ENCODE measurements at regions of chr2 and their contacts with region 1.

Region 1: GRCh38 chr2:196549052-196549451 is 90.5 kb upstream of the CCDC150 start:
- DNase-seq: no peak
- ATAC-seq: no peak
- H3K4me3 ChIP-seq: no peak overlapping the region
- H3K27ac ChIP-seq: no peak overlapping the region
- H3K4me1 ChIP-seq: no peaks in the 10 kb centered on the region
- H3K27me3 ChIP-seq: no peaks in the 10 kb centered on the region; a peak in 2 of 5 replicates
- CTCF ChIP-seq: no peak
- EP300 ChIP-seq: no peak
- POLR2A ChIP-seq: no peak
- RAD21 ChIP-seq: no peak

Region 2: DNA sequence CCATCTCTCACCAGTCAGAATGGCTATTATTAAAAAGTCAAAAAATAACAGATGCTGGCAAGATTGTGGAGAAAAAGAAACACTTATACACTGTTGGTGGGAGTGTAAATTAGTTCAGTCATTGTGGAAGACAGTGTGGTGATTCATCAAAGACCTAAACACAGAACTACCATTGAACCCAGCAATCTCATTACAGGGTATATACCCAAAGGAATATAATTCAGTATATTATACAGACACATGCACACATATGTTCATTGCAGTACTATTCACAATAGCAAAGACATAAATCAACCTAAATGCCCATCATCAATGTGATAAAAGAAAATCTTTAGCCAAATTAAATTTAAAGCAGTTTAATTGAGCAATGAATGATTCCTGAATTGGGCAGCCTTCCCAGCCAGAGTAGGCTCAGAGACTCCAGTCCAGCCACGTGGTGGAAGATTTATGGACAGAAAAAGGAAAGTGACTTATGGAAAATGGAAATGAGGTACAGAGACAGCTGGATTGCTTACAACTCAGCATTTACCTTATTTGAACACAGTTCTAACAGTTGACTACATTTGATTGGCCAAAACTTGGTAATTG is 1269.1 kb before region 1 on chr2:
- CTCF ChIA-PET with region 1: no interaction called
- POLR2A ChIA-PET with region 1: no interaction called
- in situ Hi-C with region 1: no loop called
- intact Hi-C with region 1: no loop called
- DNase-seq: no peak
- ATAC-seq: no peak
- H3K4me3 ChIP-seq: no peak overlapping the region
- H3K27ac ChIP-seq: no peak overlapping the region
- H3K4me1 ChIP-seq: no peaks in the 10 kb centered on the region
- H3K27me3 ChIP-seq: no peaks in the 10 kb centered on the region; a peak in 1 of 5 replicates
- CTCF ChIP-seq: no peak
- EP300 ChIP-seq: no peak
- POLR2A ChIP-seq: no peak
- RAD21 ChIP-seq: no peak

Region 3: GRCh38 chr2:196486146-196486545 is 62.9 kb before region 1 on chr2:
- CTCF ChIA-PET with region 1: no interaction called
- POLR2A ChIA-PET with region 1: no interaction called
- in situ Hi-C with region 1: no loop called
- intact Hi-C with region 1: no loop called
- DNase-seq: no peak
- ATAC-seq: no peak
- H3K4me3 ChIP-seq: no peak overlapping the region
- H3K27ac ChIP-seq: no peak overlapping the region
- H3K4me1 ChIP-seq: no peaks in the 10 kb centered on the region
- H3K27me3 ChIP-seq: peaks cover 0 to 7% of the 10 kb centered on the region in 2 experiments; a peak in 2 of 5 replicates
- CTCF ChIP-seq: no peak
- EP300 ChIP-seq: no peak
- POLR2A ChIP-seq: no peak
- RAD21 ChIP-seq: no peak

Region 4: DNA sequence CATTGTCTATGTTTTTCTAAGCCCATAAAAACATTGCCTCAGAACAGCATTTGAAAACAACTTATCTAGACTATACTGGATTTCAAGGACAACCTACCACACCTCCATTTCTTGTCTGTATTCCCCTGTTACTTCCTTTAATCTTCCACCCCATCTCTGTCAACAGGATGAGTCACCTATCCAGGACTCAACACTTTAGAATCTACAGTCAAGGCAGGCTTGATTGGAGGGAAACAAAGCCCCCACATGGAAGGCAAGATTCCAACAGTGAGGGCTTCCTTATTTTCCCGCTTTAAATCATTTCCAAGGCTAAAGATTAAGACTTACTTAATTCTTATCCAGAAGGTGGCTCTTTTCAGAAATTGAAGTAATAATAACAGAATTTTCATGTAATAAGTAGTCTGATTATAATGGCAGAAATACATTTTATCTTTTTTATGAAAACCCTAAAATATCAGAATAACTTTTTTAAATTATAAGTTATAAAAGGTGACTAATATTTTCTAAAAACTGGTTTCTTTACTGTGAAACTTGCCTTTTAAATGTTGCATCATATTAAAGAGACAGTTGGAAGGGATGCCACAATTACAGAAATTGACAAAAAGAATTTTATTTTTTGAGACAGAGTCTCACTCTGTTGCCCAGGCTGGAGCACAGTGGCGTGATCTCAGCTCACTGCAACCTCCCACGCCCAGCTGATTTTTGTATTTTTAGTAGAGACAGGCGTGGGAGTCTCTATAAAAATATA is 48.2 kb before region 1 on chr2:
- CTCF ChIA-PET with region 1: no interaction called
- POLR2A ChIA-PET with region 1: no interaction called
- in situ Hi-C with region 1: no loop called
- intact Hi-C with region 1: no loop called
- DNase-seq: no peak
- ATAC-seq: no peak
- H3K4me3 ChIP-seq: no peak overlapping the region
- H3K27ac ChIP-seq: no peak overlapping the region
- H3K4me1 ChIP-seq: no peaks in the 10 kb centered on the region
- H3K27me3 ChIP-seq: peaks cover 0 to 4% of the 10 kb centered on the region in 2 experiments; a peak in 1 of 5 replicates
- CTCF ChIP-seq: no peak
- EP300 ChIP-seq: no peak
- POLR2A ChIP-seq: no peak
- RAD21 ChIP-seq: no peak

Region 5: DNA sequence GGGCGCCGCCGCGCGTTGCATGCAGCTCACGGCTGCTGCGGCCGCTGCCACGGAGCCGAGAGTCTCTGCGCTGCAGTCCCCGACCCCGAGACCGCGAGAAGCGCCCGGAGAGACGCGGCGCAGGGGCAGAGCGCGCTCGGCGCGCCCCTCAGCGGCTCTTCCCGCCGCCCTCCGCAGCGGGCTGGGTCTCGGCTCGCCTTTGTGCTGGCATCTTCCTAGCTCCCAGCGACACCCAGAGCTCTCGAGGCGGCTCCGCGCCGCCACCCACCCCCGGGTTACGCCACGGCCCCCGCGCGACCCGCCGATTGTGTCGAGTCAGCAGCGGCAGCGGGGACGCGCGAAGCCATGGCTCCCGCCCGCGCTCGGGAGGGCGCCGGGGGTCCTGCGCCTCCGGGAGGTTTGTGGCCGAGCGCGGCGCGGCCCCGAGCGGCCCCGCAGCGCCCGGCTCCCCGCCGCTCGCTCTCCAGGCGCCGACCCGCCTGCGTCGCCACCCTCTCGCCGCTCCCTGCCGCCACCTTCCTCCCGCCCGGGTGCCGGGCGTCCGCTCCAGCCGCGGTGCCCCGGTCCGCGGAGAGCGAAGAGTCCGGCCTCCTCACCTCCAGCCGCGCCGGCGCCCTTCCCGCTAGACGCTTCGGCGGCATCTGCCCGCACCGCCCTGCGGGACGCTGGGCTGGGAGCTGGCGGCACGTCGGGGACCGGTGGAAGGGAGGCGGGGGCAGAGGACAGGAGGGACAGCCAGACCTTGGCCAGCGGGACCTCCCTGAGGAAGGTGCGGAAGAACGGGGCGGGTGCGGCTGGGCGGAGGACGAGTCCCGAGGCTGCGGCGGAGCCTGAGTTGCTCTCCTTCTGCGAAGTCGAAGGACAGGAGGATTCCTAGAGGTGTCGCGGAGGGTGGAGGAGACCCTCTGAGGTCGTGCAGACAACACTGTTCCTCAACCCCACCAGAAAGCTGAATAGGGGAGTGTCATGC is 44.1 kb after region 1 on chr2:
- CTCF ChIA-PET with region 1: no interaction called
- POLR2A ChIA-PET with region 1: no interaction called
- in situ Hi-C with region 1: no loop called
- intact Hi-C with region 1: loop called (anchors 1 kb)
- DNase-seq: no peak
- ATAC-seq: peak; percentile 88
- H3K4me3 ChIP-seq: peak within 1 kb of the TSS; percentile 56 to 78 (median 60)
- H3K27ac ChIP-seq: no peak within 1 kb of the TSS
- H3K4me1 ChIP-seq: peaks cover 11% of the 10 kb centered on the region
- H3K27me3 ChIP-seq: peaks cover 6 to 54% of the 10 kb centered on the region in 2 experiments; a peak in 4 of 5 replicates
- CTCF ChIP-seq: no peak
- EP300 ChIP-seq: no peak
- POLR2A ChIP-seq: no peak
- RAD21 ChIP-seq: no peak; the same call in 1 of the 2 replicates

Region 6: GRCh38 chr2:197356136-197356535 is 807.1 kb after region 1 on chr2:
- CTCF ChIA-PET with region 1: no interaction called
- POLR2A ChIA-PET with region 1: no interaction called
- in situ Hi-C with region 1: no loop called
- intact Hi-C with region 1: no loop called
- DNase-seq: no peak
- ATAC-seq: peak; percentile 71
- H3K4me3 ChIP-seq: no peak overlapping the region
- H3K27ac ChIP-seq: no peak overlapping the region
- H3K4me1 ChIP-seq: no peaks in the 10 kb centered on the region
- H3K27me3 ChIP-seq: peaks cover 0 to 7% of the 10 kb centered on the region in 2 experiments; a peak in 2 of 5 replicates
- CTCF ChIP-seq: no peak
- EP300 ChIP-seq: no peak
- POLR2A ChIP-seq: no peak
- RAD21 ChIP-seq: no peak

Measured in HepG2 (cell line).